Upper lobe of right lung (tissue), 1 donor: ENCODE measurements at regions of chr3 and their contacts with region 1.

Region 1: GRCh38 chr3:196192036-196192523 is 19.1 kb downstream of the ZDHHC19 start:
- DNase-seq: no peak
- ATAC-seq: peak; percentile 57
- H3K4me3 ChIP-seq: no peak overlapping the region
- H3K27ac ChIP-seq: peak overlapping the region; percentile 80
- H3K4me1 ChIP-seq: peaks cover 21% of the 10 kb centered on the region
- H3K27me3 ChIP-seq: no peaks in the 10 kb centered on the region
- CTCF ChIP-seq: peak; percentile 21

Region 2: DNA sequence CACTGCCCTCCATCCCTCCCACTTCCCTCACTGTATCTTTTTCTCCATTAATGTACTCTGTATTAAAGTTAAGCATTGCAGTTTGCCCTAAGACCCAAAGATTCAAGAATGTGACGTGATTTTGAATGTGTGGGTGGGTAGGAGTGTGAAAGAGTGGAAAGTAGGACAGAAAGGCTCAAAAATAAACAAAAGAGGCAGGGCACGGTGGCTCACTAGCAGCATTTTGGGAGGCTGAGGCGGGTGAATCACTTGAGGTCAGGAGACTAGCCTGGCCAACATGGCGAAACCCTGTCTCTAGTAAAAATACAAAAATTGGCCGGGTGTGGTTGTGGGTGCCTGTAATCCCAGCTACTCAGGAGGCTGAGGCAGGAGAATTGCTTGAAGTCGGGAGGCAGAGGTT is 128.6 kb before region 1 on chr3:
- intact Hi-C with region 1: loop called (anchors 10 kb)
- DNase-seq: peak; percentile 9
- ATAC-seq: no peak
- H3K4me3 ChIP-seq: no peak overlapping the region
- H3K27ac ChIP-seq: no peak overlapping the region
- H3K4me1 ChIP-seq: no peaks in the 10 kb centered on the region
- H3K27me3 ChIP-seq: no peaks in the 10 kb centered on the region
- CTCF ChIP-seq: no peak

Region 3: DNA sequence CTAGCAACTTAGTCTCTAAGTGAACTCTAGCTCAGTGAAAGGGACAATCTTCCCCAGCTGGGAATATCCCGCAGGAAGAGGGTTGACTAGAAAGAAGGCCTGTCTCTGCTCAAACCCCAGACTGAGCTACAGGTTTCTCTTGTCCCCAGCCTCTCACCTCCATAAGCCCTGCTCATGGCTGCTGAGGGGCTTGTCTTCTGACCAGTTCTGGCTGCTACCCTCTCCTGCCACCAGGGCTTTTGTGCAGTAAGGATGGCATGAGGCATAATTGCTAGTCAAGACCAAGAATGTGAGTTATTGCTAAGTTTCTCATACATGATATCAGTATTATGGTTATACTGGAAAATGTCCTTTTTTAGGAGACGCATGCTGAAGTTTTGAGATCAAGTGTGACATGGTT is 355.0 kb after region 1 on chr3:
- intact Hi-C with region 1: no loop called
- DNase-seq: no peak
- ATAC-seq: no peak
- H3K4me3 ChIP-seq: no peak overlapping the region
- H3K27ac ChIP-seq: no peak overlapping the region
- H3K4me1 ChIP-seq: no peaks in the 10 kb centered on the region
- H3K27me3 ChIP-seq: no peaks in the 10 kb centered on the region
- CTCF ChIP-seq: no peak